ENCODE measurements at regions of chr14 and their contacts with region 1.

Region 1: GRCh38 chr14:23910101-23910875 is 43.3 kb upstream of the DHRS4 start:
- DNase-seq: no peak
- ATAC-seq: no peak
- H3K4me3 ChIP-seq: no peak overlapping the region
- H3K27ac ChIP-seq: no peak overlapping the region
- H3K4me1 ChIP-seq: no peaks in the 10 kb centered on the region
- H3K27me3 ChIP-seq: no peaks in the 10 kb centered on the region

Region 2: DNA sequence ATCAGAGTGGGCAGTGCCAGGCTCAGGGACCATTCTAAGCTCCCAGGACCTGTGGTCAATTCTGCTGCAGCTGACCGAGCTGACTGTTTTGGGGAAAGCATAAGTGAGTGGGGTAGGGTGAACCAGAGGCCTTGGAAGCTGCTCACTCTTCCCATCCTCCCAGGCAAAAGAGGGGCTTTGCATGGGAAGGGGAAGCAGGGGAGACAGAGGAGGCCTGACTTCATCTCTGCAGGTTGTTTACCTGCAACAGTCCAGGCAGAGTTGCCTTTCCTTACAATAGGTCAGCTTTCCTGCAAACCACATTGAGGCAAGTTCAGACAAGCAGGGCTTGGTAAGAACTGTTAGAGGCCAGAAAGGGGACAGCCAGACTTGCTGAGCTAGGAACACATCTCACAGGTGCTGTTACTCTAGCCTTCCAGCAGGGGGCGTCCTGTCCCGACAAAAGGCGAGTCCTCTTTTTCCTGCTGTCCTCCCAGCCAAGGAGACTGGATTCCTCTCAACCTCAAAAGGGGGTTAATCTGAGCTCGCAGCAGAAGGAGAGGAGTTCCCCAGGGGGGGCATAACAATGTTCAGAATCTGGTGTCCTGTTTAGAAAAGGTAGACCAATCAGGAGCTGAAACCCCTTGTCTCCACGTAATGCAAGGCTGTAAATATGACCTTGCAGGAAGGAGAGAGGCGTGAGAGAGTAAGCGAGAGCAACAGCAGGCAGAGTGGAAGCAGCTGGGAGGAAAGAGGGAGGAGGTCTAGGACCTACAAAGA is 278.4 kb before region 1 on chr14:
- intact Hi-C with region 1: loop called in 1 of 2 experiments (anchors 10 kb)
- DNase-seq: peak; percentile 71 to 91
- ATAC-seq: peak; percentile 86
- H3K4me3 ChIP-seq: no peak overlapping the region
- H3K27ac ChIP-seq: no peak overlapping the region
- H3K4me1 ChIP-seq: no peaks in the 10 kb centered on the region
- H3K27me3 ChIP-seq: no peaks in the 10 kb centered on the region

Region 3: DNA sequence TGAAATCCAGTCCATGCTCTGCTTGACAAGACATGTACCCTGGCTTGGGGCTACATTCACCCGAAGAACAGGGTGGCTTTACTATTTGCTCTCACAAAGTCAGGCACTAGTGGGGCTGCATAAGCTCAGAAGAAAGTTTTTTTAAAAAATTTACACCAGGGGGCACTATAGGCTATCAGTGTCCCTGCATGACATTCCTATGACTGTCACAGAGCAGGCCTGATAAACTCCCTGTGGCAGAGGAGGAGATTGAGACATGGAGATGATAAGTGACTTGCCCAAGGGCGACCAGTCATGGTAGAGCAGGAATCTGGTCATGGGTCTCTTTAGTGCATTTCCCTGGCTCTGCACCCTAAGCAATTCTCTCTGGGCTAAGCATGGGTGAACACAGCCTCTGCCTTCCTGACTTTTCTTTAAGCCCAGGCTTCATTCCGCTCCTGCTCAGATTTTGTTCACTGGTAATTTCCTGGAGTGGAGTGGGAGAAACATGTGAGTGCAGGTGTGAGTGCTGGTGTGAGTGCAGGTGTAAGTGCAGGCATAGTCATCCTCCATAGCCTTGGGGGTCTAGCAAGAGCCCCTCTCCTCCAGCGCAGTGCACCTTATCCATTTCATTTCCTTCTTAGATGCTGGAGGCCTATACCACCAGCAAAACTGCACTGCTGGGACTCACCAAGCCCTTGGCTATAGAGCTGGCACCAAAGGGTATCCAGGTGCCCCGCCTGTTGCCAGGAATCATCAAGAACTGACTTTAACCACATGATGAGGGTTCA is 182.5 kb before region 1 on chr14:
- intact Hi-C with region 1: loop called in 1 of 2 experiments (anchors 5 kb)
- DNase-seq: no peak
- ATAC-seq: no peak
- H3K4me3 ChIP-seq: no peak overlapping the region
- H3K27ac ChIP-seq: no peak overlapping the region
- H3K4me1 ChIP-seq: no peaks in the 10 kb centered on the region
- H3K27me3 ChIP-seq: no peaks in the 10 kb centered on the region

Region 4: GRCh38 chr14:23877538-23878180 is 32.6 kb before region 1 on chr14:
- intact Hi-C with region 1: no loop called
- DNase-seq: no peak
- ATAC-seq: no peak
- H3K4me3 ChIP-seq: no peak overlapping the region
- H3K27ac ChIP-seq: no peak overlapping the region
- H3K4me1 ChIP-seq: no peaks in the 10 kb centered on the region
- H3K27me3 ChIP-seq: peaks cover 0 to 1% of the 10 kb centered on the region in 2 donors